GM10248 (cell line): ENCODE measurements at regions of chr1 and their contacts with region 1.

Region 1: DNA sequence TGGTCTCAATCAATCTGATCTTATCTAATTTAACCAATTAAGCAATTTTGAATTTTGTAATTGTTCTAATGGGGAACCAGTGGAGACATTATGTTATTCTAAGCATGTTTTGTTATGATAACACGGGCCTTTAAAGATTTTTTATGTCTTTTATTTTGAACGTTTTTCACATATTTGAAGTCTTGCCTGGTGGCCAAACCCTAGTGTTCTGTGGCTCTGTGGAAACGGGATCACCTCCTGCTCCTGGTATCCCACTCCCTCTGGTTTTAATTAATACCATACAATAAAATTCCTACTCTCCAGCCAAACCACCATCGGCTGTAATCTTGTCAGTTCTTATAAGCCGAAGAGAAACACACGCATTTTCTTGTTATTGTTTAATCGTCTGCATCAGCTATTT is 22.9 kb upstream of the LMO4 start:
- DNase-seq: no peak
- CTCF ChIP-seq: no peak

Region 2: DNA sequence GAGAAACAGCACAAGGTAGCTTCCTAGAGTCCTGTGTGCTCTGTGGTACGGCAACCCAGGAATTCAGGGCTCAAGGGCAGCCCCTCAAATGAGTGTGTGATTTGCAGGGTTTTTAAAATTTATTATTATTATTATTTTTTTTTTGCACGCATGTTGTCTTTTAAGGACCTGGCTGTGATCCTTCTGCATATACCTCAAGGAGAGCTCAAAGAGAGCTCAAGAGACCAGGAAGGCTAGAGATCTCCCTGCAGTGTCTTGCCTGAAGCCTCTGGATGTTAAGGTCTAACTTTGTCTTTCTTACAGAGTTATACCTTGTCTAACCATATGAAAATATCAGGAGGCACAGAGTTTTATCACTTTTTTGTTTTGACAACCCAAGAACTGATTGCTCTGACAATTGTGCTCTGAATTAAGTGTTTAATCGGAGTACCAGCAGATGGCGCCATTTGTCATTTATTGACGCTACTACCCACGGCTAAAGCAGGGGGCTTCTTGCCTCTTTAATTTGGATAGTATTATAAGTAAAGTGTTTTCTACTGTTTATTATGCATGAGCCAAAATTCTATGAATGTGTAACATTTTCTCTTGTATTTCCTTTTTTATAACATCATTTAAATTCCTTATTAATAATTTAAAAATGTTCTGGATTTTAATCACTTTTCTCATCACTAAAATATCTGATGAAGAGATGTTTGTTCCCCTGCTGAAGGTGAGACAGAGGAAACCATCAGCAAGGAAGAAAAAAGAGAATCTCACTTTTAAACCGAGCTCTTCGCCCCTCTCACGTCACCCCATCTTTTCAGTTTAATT is 12.9 kb before region 1 on chr1:
- CTCF ChIA-PET with region 1: interaction called, 13 read pairs
- POLR2A ChIA-PET with region 1: no interaction called
- DNase-seq: peak; percentile 48
- CTCF ChIP-seq: peak; percentile 66

Region 3: GRCh38 chr1:87325982-87326738 is 20.4 kb after region 1 on chr1:
- CTCF ChIA-PET with region 1: interaction called, 14 read pairs
- POLR2A ChIA-PET with region 1: no interaction called
- DNase-seq: peak; percentile 41
- CTCF ChIP-seq: peak; percentile 77